ENCODE measurements at regions of chr5 and their contacts with region 1.

Region 1: DNA sequence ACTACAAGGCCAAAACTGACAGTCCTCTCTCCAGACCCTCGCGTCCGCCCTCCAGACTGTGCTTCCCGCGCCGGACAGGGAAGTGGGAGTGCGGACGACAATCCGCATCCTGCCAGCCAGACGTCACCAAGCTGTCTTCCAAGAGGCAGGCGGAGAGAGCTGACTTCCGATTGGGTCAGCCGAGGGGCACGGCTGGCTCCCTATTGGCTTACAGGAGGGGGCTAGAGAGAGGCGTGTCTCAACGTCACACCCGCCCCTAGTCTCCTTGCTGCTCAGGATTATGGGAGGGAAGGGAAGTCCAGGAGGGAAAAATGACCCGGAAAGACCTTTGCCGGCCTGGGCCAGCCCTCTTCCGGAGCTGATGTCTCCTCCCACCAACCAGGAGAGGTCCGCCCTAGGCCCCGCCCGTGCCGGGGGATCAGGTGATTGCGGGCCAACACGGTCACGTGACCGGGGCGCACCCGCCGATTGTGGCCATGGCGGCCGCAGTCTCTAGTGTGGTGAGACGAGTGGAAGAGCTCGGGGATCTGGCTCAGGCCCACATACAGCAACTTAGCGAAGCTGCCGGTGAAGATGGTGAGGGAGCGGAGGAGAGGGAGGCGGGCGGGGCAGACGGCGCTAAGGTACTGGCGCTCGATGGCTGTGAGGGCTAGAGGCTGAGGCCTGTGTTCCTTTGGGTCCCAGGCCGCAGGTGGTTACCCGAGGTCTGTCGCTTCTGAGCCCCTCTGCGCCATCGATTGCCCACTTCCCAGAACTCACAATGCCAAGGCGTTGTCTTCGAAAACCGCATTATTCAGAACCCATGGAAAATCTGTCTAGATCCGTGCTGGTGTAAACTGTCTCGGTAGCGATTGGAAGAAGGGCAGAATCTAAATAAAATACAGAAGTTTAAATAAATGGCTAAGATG is at the start of gene RIMOC1:
- DNase-seq: peak; percentile 98 to 99
- ATAC-seq: peak; percentile 98 to 99 (median 99)
- H3K4me3 ChIP-seq: peak within 1 kb of the TSS; percentile 87
- H3K27ac ChIP-seq: peak within 1 kb of the TSS; percentile 95
- H3K4me1 ChIP-seq: peaks cover 42% of the 10 kb centered on the region
- H3K27me3 ChIP-seq: no peaks in the 10 kb centered on the region
- CTCF ChIP-seq: no peak
- total RNA-seq, gene RIMOC1: 5.9 to 9.7 (median 8.6) TPM

Region 2: DNA sequence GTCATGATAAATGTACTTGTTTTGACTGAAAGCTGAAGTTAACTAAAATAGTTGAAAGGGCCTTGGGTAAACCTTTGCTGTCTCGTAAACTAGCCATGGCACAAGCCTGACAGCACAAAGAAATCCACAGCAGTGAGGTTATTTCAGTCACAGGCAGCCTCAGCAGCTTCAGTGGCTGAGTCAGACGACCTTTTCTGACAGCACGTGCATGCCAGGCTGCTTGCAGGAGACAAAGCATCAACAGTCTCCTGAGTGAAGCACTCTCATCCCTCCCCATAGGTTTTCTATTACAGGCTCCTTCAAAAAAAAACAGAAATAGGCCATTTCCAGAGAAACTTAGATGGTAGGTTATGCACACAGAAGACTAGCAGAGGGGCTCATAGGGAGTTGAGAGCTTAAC is 68.5 kb before region 1 on chr5:
- intact Hi-C with region 1: no loop called
- DNase-seq: peak; percentile 36 to 67
- ATAC-seq: peak; percentile 93 to 100 (median 98)
- H3K4me3 ChIP-seq: no peak overlapping the region
- H3K27ac ChIP-seq: peak overlapping the region; percentile 56
- H3K4me1 ChIP-seq: no peaks in the 10 kb centered on the region
- H3K27me3 ChIP-seq: no peaks in the 10 kb centered on the region
- CTCF ChIP-seq: no peak

Region 3: GRCh38 chr5:41869739-41870626 is 34.2 kb before region 1 on chr5 and contains the start of gene OXCT1:
- intact Hi-C with region 1: loop called in 1 of 2 experiments (anchors 5 kb)
- DNase-seq: peak; percentile 80 to 89
- ATAC-seq: peak; percentile 72 to 90 (median 84)
- H3K4me3 ChIP-seq: peak within 1 kb of the TSS; percentile 85
- H3K27ac ChIP-seq: peak within 1 kb of the TSS; percentile 78
- H3K4me1 ChIP-seq: peaks cover 5% of the 10 kb centered on the region
- H3K27me3 ChIP-seq: no peaks in the 10 kb centered on the region
- CTCF ChIP-seq: no peak
- total RNA-seq, gene OXCT1: 10.7 to 22.1 (median 20.5) TPM